Activated naive CD4-positive, alpha-beta T cell treated with anti-CD3 and anti-CD28 coated beads for 36 hours (primary cell): ENCODE measurements at regions of chr7 and their contacts with region 1.

Region 1: DNA sequence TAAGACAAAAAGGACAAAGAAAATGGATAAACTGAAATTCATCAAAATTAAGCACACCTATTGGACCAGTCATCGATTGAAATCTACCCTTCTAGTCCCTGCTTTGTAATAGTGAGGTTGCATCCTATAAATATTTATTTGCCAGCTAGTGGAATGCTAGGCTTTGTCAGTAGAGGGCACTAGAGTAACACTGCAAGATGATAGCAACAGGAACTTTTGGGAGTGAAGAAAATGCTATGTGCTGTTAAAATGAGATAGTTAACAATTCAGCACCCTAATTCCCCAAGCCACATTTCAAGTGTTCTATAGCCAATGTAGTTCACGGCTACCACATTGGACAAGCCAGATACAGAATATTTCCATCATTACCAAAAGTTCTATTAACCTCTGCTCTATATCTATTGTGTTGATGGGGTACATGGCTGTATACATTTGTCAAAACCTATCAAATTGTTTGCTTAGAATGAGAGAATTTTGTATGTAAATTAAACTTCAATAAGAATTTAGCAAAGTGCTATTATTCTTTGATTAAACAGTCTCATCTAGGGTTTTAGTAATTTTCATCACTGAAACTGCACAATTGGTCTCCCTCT is 69.8 kb downstream of the LSMEM1 start:
- DNase-seq: peak; percentile 39
- H3K4me3 Mint-ChIP-seq: no peak overlapping the region
- H3K27ac Mint-ChIP-seq: no peak overlapping the region
- H3K4me1 Mint-ChIP-seq: no peaks in the 10 kb centered on the region
- H3K27me3 Mint-ChIP-seq: peaks cover 11% of the 10 kb centered on the region

Region 2: GRCh38 chr7:112898432-112899290 is 348.1 kb after region 1 on chr7:
- CTCF ChIA-PET with region 1: interaction called, 9 read pairs
- intact Hi-C with region 1: loop called (anchors 1 kb)
- DNase-seq: peak; percentile 61
- H3K4me3 Mint-ChIP-seq: no peak overlapping the region
- H3K27ac Mint-ChIP-seq: no peak overlapping the region
- H3K4me1 Mint-ChIP-seq: no peaks in the 10 kb centered on the region
- H3K27me3 Mint-ChIP-seq: no peaks in the 10 kb centered on the region

Region 3: GRCh38 chr7:113289140-113289740 is 738.7 kb after region 1 on chr7:
- CTCF ChIA-PET with region 1: no interaction called
- intact Hi-C with region 1: loop called (anchors 2 kb)
- DNase-seq: peak; percentile 13
- H3K4me3 Mint-ChIP-seq: no peak overlapping the region
- H3K27ac Mint-ChIP-seq: no peak overlapping the region
- H3K4me1 Mint-ChIP-seq: no peaks in the 10 kb centered on the region
- H3K27me3 Mint-ChIP-seq: peaks cover 3% of the 10 kb centered on the region

Region 4: GRCh38 chr7:113698556-113699220 is 1148.1 kb after region 1 on chr7:
- CTCF ChIA-PET with region 1: no interaction called
- intact Hi-C with region 1: loop called (anchors 5 kb)
- DNase-seq: no peak
- H3K4me3 Mint-ChIP-seq: no peak overlapping the region
- H3K27ac Mint-ChIP-seq: no peak overlapping the region
- H3K4me1 Mint-ChIP-seq: no peaks in the 10 kb centered on the region
- H3K27me3 Mint-ChIP-seq: no peaks in the 10 kb centered on the region